Psoas muscle (tissue), 8 donors: ENCODE measurements at regions of chr2 and their contacts with region 1.

Region 1: GRCh38 chr2:217650716-217651360 is 352.0 kb downstream of the TNS1 start:
- DNase-seq: no peak
- ATAC-seq: peak; percentile 65 to 84 (median 81)
- H3K4me3 ChIP-seq: no peak overlapping the region
- H3K27ac ChIP-seq: no peak overlapping the region
- H3K4me1 ChIP-seq: no peaks in the 10 kb centered on the region
- H3K27me3 ChIP-seq: no peaks in the 10 kb centered on the region
- CTCF ChIP-seq: peak; percentile 71

Region 2: GRCh38 chr2:217521820-217522219 is 129.0 kb before region 1 on chr2:
- intact Hi-C with region 1: no loop called
- DNase-seq: no peak
- ATAC-seq: peak in 3 of 4 donors; percentile 37 to 65 (median 39)
- H3K4me3 ChIP-seq: no peak overlapping the region
- H3K27ac ChIP-seq: no peak overlapping the region
- H3K4me1 ChIP-seq: peaks cover 10% of the 10 kb centered on the region
- H3K27me3 ChIP-seq: no peaks in the 10 kb centered on the region
- CTCF ChIP-seq: no peak

Region 3: GRCh38 chr2:217695033-217695520 is 44.2 kb after region 1 on chr2:
- intact Hi-C with region 1: no loop called
- DNase-seq: no peak
- ATAC-seq: peak; percentile 47 to 65 (median 56)
- H3K4me3 ChIP-seq: no peak overlapping the region
- H3K27ac ChIP-seq: no peak overlapping the region
- H3K4me1 ChIP-seq: peaks cover 4% of the 10 kb centered on the region
- H3K27me3 ChIP-seq: no peaks in the 10 kb centered on the region
- CTCF ChIP-seq: no peak

Region 4: GRCh38 chr2:217713395-217714286 is 62.8 kb after region 1 on chr2:
- intact Hi-C with region 1: loop called in 1 of 2 experiments (anchors 5 kb)
- DNase-seq: peak; percentile 74 to 88
- ATAC-seq: peak; percentile 89 to 96 (median 91)
- H3K4me3 ChIP-seq: no peak overlapping the region
- H3K27ac ChIP-seq: peak overlapping the region; percentile 2
- H3K4me1 ChIP-seq: peaks cover 17% of the 10 kb centered on the region
- H3K27me3 ChIP-seq: no peaks in the 10 kb centered on the region
- CTCF ChIP-seq: peak; percentile 98

Region 5: GRCh38 chr2:217775920-217776492 is 125.2 kb after region 1 on chr2:
- intact Hi-C with region 1: no loop called
- DNase-seq: no peak
- ATAC-seq: peak in 1 of 4 donors; percentile 41
- H3K4me3 ChIP-seq: no peak overlapping the region
- H3K27ac ChIP-seq: no peak overlapping the region
- H3K4me1 ChIP-seq: no peaks in the 10 kb centered on the region
- H3K27me3 ChIP-seq: no peaks in the 10 kb centered on the region
- CTCF ChIP-seq: no peak